ENCODE measurements at regions of chr7 and their contacts with region 1.

Region 1: DNA sequence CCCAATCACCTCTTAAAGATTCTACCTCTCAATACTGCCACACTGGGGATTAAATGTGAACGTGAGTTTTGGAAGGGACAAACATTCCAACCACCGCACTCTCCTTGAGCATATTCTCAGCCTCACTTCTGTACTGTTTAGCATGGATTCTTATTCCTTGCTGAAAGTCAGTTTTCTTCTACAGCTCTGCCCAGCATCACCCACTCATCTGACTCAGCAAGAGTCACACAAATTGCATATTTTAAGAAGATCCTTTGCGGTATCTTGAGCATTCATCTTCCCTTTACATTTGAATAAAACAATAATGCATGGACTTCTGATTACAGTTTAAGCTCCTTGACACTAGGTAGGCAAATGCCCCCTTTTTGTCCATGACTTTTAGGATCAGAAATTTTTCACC is 251.6 kb upstream of the MKLN1 start:
- H3K4me3 ChIP-seq: no peak overlapping the region
- H3K27ac ChIP-seq: no peak overlapping the region
- H3K4me1 ChIP-seq: peaks cover 3% of the 10 kb centered on the region; the same call in 1 of the 2 replicates
- CTCF ChIP-seq: no peak

Region 2: DNA sequence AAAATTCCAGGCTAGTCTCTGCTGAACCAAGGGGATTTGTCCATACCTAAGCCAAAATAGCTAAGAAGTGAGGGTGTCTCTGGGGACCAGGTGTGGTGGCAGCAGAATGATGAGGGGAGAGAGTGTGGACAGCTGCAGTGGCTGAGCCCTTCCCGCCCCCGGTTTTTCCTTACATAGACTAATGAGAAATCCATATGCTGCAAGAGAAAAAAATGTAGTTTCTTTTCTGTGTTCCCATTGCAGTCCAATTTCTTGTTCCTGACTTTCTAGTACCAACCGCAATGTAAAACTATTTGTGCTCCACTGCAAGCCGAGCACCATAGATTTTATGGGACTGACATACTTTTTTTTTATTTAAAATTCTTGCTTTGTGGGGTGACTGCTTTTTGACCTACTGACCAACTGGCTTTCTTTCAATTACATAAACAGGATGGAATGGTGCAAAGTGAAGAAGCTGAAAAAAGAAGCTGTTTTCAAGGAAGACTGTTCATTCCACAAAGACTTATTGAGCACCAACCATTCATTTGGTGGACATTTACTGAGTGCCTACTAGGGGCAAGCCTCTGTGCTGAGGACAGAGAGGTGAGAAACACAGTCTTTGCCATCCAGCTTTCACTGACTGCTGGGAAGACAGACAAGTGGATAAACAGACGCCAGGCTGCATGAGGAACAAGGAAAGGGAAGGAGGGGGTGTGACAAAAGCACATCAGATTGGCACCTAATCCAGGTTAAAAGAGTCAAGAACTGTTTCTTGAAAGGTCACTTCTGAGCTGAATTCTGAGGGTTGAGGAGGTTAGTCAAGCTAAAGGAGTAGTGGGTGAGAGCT is 645.0 kb before region 1 on chr7:
- CTCF ChIA-PET with region 1: no interaction called
- POLR2A ChIA-PET with region 1: no interaction called
- H3K4me3 ChIP-seq: no peak overlapping the region
- H3K27ac ChIP-seq: no peak overlapping the region
- H3K4me1 ChIP-seq: peaks cover 5% of the 10 kb centered on the region; the same call in 1 of the 2 replicates
- CTCF ChIP-seq: no peak

Region 3: GRCh38 chr7:131057015-131057793 is 18.8 kb before region 1 on chr7:
- CTCF ChIA-PET with region 1: no interaction called
- POLR2A ChIA-PET with region 1: no interaction called
- H3K4me3 ChIP-seq: no peak overlapping the region
- H3K27ac ChIP-seq: no peak overlapping the region
- H3K4me1 ChIP-seq: no peaks in the 10 kb centered on the region
- CTCF ChIP-seq: no peak

Region 4: GRCh38 chr7:131346885-131347592 is 271.0 kb after region 1 on chr7:
- CTCF ChIA-PET with region 1: interaction called, 10 read pairs
- POLR2A ChIA-PET with region 1: no interaction called
- H3K4me3 ChIP-seq: no peak overlapping the region
- H3K27ac ChIP-seq: no peak overlapping the region
- H3K4me1 ChIP-seq: no peaks in the 10 kb centered on the region
- CTCF ChIP-seq: no peak